Activated naive CD4-positive, alpha-beta T cell treated with anti-CD3 and anti-CD28 coated beads for 36 hours (primary cell): ENCODE measurements at regions of chr16 and their contacts with region 1.

Region 1: DNA sequence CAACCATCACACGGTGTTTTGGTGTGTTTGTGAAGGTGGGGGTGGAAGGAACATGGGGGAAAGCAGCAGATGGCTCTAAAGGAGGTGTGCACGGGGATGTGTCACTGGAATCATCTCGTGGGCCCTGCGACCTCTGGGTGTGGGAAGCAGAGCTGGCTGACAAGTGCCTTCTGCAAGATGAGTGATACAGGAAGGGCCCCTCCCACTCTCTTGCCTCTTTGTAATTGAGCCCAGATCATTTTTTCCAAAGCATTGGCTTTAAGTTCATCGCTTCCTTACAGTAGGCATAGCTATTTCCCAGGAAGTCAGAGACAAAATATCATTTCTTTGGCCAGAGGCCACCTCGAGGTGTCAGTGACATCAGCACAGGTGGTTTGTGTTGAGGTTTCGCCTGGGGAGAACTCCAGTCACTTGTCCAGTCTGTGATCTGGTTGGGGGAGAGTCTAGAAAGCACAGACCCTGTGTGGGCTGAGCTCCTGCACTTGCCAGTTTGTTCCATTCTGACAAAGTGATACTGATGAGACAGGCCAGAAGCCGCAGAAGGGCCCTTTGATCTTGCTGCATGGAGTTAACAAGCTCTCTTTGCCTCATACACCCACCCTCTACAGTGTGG is 20.6 kb upstream of the SNTB2 start:
- DNase-seq: peak; percentile 88
- H3K4me3 Mint-ChIP-seq: peak overlapping the region; percentile 23
- H3K27ac Mint-ChIP-seq: peak overlapping the region; percentile 75
- H3K4me1 Mint-ChIP-seq: peaks cover 46% of the 10 kb centered on the region
- H3K27me3 Mint-ChIP-seq: no peaks in the 10 kb centered on the region

Region 2: DNA sequence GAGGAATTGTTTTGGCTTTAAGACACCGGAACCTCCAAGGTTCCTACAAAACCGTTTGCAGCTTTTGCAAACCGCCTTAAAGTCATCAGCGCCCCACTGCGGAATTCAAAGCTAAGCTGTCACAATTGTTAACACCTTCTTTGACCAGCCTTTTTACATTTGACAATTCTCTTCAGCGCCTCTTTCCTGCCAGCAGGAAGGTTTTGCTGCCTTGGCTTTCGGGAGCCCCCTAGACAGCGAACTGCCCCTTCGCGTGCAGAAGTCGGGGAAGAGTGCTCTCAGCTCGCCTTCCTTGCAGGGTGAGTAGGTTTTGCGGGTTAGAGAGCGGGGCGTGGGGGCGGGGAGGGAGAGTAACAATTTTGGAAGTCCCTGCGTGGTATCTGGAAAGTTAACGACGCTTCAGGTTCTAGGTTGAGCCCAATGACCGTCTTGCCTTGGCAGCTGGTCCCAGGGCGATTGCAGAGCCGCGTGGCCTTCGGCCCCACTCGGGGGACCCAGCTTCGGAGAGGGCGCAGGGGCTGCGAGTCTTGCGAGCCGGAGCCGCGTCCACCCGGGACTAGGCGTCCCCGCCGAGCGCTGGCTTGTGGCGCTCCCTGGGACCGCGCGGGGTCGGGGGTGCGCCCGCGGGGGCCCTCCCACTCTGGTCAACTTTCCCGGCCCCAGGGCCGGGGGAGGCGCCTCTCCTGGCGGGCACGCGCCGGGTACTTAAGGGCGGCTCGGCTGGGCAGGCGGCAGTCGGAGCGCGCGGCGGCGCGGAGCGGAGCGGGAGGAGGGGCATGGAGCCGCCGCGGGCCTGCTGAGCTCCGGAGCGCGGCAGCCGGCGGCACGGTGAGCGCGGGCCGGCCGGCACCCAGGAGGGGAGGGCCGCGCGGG is 60.6 kb before region 1 on chr16 and contains the start of gene HAS3:
- CTCF ChIA-PET with region 1: no interaction called
- intact Hi-C with region 1: no loop called
- DNase-seq: peak; percentile 60
- H3K4me3 Mint-ChIP-seq: peak within 1 kb of the TSS; percentile 79
- H3K27ac Mint-ChIP-seq: peak within 1 kb of the TSS; percentile 26
- H3K4me1 Mint-ChIP-seq: peaks cover 21% of the 10 kb centered on the region
- H3K27me3 Mint-ChIP-seq: peaks cover 26% of the 10 kb centered on the region
- total RNA-seq, gene HAS3: 0.20 to 0.31 TPM

Region 3: GRCh38 chr16:69132424-69133252 is 33.7 kb before region 1 on chr16 and contains the starts of genes CHTF8 and UTP4:
- CTCF ChIA-PET with region 1: interaction called, 4 read pairs
- intact Hi-C with region 1: loop called (anchors 1 kb)
- DNase-seq: peak; percentile 89
- H3K4me3 Mint-ChIP-seq: peak within 1 kb of the TSS; percentile 96
- H3K27ac Mint-ChIP-seq: peak within 1 kb of the TSS; percentile 90
- H3K4me1 Mint-ChIP-seq: peaks cover 59% of the 10 kb centered on the region
- H3K27me3 Mint-ChIP-seq: no peaks in the 10 kb centered on the region
- total RNA-seq, gene CHTF8: 114 to 117 TPM
- total RNA-seq, gene UTP4: 62.6 to 69.8 TPM

Region 4: DNA sequence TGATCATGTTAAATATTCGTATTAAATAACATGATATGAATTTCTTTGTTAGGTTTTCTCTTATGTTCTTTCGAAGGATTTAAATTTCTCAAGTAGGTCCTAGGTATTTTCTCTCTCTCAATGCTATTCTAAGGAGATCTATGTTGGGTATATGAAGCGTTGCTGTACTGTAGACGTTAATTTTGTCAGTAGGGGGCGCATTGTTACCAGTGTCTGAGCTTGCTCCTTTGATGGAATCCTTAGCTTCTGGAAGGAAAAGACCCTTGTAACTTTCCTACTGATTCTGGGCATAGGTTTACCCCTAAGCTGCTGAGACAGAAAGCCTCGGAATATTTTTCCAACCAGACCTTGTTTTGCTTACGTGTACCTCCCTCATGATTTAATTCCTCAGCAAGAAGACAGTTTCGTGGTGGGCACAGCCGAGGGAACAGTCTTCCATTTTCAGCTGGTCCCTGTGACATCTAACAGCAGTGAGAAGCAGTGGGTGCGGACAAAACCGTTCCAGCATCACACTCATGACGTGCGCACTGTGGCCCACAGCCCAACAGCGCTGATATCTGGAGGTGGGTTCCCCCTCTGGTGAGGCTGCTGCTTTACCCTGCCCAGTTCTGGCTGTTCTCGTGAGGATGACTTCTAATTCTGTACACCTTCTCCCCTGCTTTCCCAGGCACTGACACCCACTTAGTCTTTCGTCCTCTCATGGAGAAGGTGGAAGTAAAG is 16.0 kb before region 1 on chr16:
- CTCF ChIA-PET with region 1: interaction called, 36 read pairs
- intact Hi-C with region 1: no loop called
- DNase-seq: peak; percentile 66
- H3K4me3 Mint-ChIP-seq: no peak overlapping the region
- H3K27ac Mint-ChIP-seq: no peak overlapping the region
- H3K4me1 Mint-ChIP-seq: no peaks in the 10 kb centered on the region
- H3K27me3 Mint-ChIP-seq: no peaks in the 10 kb centered on the region

Region 5: DNA sequence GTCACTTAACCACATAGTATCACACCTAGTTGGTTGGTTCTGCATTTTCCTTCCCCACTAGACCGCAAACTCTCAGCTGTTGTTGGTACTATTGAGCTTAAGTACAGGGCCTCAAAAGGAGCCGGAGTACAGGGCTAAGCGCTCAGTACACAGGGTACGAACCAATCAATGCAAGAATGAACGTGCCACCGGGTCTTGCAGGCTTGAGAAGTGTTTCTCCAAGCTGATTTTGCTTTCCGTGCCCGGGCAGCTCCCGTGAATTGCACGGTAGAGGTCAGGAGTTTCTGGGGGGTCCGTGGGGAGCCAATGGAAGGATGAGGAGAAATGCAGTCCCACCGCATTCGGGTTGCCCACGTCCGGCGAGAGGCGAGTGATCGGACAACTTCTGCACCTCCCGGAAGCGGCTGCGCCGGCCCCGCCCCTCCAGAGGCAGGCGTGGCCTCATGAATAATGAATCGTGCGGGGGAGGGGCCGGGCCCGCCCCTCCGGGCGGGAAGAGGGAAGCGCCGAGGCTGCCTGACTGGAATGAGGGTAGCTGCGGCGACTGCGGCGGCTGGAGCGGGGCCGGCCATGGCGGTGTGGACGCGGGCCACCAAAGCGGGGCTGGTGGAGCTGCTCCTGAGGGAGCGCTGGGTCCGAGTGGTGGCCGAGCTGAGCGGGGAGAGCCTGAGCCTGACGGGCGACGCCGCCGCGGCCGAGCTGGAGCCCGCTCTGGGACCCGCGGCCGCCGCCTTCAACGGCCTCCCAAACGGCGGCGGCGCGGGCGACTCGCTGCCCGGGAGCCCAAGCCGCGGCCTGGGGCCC is 20.5 kb after region 1 on chr16 and contains the start of gene SNTB2:
- CTCF ChIA-PET with region 1: interaction called, 8 read pairs
- intact Hi-C with region 1: loop called (anchors 1 kb)
- DNase-seq: peak; percentile 86
- H3K4me3 Mint-ChIP-seq: peak within 1 kb of the TSS; percentile 91
- H3K27ac Mint-ChIP-seq: peak within 1 kb of the TSS; percentile 83
- H3K4me1 Mint-ChIP-seq: peaks cover 42% of the 10 kb centered on the region
- H3K27me3 Mint-ChIP-seq: no peaks in the 10 kb centered on the region
- total RNA-seq, gene SNTB2: 7.3 to 7.8 TPM

Region 6: DNA sequence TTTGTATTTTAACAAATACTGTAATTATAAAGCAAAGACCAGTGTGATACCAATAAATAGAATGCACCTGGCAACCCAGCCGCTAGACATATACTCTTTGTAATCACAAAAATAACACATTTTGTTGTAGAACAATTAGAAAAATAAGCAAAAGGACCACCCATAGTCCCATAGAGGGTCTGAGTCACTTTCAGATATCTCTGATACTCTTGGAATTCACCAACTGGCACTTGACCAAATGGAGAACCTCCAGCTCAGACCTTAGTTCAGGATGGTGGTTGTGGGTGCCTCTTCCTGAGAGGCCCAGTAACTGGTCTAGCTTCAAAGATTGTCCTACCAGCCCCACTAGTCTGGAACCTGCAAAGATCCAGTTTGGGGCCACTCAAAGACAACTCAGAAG is 220.3 kb after region 1 on chr16:
- CTCF ChIA-PET with region 1: no interaction called
- intact Hi-C with region 1: loop called (anchors 10 kb)
- DNase-seq: no peak
- H3K4me3 Mint-ChIP-seq: peak overlapping the region; percentile 97
- H3K27ac Mint-ChIP-seq: peak overlapping the region; percentile 92
- H3K4me1 Mint-ChIP-seq: peaks cover 29% of the 10 kb centered on the region
- H3K27me3 Mint-ChIP-seq: no peaks in the 10 kb centered on the region

Region 7: GRCh38 chr16:69535123-69536050 is 369.1 kb after region 1 on chr16:
- CTCF ChIA-PET with region 1: no interaction called
- intact Hi-C with region 1: loop called (anchors 1 kb)
- DNase-seq: no peak
- H3K4me3 Mint-ChIP-seq: no peak overlapping the region
- H3K27ac Mint-ChIP-seq: no peak overlapping the region
- H3K4me1 Mint-ChIP-seq: peaks cover 26% of the 10 kb centered on the region
- H3K27me3 Mint-ChIP-seq: no peaks in the 10 kb centered on the region